ENCODE measurements at regions of chr7 and their contacts with region 1.

Region 1: DNA sequence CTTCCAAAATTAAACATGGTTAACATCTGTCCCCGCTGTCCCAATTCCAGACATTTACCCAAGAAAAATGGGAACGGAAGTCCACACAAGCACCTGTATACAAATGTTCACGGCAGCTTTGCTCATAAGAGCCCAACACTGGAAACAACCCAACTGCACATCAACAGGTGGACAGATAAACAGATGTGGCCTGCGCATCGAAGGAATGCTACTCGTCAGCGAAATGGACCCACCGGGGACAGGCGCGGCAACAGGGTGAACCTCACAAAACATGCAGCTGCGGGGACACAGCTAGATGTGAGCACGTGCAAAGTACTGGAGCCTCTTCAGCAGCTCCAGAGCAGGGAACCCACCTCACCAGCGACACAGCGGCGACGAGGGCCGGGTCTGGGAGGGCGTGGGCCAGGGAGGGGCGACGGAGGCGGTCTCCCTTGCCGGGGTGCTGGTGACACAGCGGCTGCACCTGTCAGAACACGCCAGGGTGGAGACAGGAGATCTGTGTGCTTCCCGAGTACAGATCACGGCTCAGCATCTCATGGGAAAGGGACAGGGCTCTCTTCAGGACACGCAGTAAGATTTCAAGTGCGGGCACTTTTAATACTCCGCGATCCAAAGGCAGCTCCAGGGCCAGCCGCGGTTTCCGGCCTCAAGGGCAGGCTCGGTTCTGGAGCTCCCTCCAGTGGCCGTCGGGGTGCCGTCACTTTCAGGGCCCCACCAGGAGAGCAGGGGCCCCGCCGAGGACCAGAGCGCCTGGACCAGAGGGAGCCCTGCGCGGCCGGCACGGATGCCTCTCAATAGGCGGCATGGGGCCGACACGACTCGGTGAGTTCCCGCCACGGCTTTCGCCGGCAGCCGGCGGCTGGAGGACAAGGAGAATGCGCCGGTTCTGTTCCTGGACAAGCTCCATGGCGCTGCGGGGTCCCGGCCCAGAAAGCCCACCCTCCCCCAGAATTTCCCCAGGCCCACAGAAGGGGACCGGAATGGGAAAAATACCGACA is 21.2 kb downstream of the GPR146 start:
- DNase-seq: peak; percentile 92
- CTCF ChIP-seq: peak; percentile 94

Region 2: GRCh38 chr7:891291-891690 is 174.3 kb before region 1 on chr7:
- CTCF ChIA-PET with region 1: no interaction called
- POLR2A ChIA-PET with region 1: no interaction called
- DNase-seq: no peak
- CTCF ChIP-seq: no peak

Region 3: GRCh38 chr7:974820-975681 is 90.5 kb before region 1 on chr7 and contains the start of gene COX19:
- CTCF ChIA-PET with region 1: interaction called, 25 read pairs
- POLR2A ChIA-PET with region 1: no interaction called
- DNase-seq: peak; percentile 94
- CTCF ChIP-seq: no peak

Region 4: DNA sequence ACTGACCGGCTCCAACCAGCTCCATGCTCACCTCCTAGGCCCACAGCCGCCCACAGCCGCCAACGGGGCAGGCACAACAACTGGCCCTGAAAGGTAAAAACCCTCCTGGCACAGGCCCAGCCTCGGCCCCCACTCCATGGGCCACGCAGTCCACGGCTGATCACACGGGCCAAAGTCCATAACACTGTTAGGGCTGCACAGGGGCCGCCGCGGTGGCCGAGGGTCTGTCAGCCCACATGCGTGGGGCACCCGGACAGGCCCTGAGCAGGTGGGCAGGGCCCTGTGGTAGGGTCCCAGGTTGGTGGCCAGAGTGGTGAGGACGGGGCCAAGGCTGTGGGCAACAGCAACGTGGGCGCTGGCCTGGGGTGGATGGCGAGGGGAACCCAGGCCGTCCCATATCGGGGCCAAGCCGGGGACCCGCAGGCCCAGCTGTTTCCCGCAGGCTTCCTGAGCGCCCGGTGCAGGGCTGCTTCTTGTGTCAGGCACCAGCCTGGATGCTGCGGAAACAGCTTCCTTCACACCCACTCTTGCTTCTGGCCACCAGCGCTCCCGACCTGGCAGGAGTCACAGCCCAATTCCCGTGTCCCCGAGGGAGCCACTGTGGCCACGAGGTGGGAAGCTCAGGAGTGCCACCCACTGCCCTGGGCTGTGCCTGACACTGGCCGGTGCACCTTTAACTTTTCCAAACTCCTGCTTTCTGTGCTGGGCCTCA is 53.4 kb before region 1 on chr7:
- CTCF ChIA-PET with region 1: interaction called, 11 read pairs
- POLR2A ChIA-PET with region 1: no interaction called
- DNase-seq: no peak
- CTCF ChIP-seq: no peak

Region 5: GRCh38 chr7:1028775-1029636 is 36.6 kb before region 1 on chr7:
- CTCF ChIA-PET with region 1: interaction called, 11 read pairs
- POLR2A ChIA-PET with region 1: no interaction called
- DNase-seq: peak; percentile 83
- CTCF ChIP-seq: no peak

Region 6: GRCh38 chr7:1053002-1053478 is 12.5 kb before region 1 on chr7:
- CTCF ChIA-PET with region 1: interaction called, 40 read pairs
- POLR2A ChIA-PET with region 1: no interaction called
- DNase-seq: no peak
- CTCF ChIP-seq: no peak

Region 7: GRCh38 chr7:1086588-1087464 is 21.3 kb after region 1 on chr7:
- CTCF ChIA-PET with region 1: interaction called, 47 read pairs
- POLR2A ChIA-PET with region 1: no interaction called
- DNase-seq: peak; percentile 90
- CTCF ChIP-seq: peak; percentile 85

Region 8: DNA sequence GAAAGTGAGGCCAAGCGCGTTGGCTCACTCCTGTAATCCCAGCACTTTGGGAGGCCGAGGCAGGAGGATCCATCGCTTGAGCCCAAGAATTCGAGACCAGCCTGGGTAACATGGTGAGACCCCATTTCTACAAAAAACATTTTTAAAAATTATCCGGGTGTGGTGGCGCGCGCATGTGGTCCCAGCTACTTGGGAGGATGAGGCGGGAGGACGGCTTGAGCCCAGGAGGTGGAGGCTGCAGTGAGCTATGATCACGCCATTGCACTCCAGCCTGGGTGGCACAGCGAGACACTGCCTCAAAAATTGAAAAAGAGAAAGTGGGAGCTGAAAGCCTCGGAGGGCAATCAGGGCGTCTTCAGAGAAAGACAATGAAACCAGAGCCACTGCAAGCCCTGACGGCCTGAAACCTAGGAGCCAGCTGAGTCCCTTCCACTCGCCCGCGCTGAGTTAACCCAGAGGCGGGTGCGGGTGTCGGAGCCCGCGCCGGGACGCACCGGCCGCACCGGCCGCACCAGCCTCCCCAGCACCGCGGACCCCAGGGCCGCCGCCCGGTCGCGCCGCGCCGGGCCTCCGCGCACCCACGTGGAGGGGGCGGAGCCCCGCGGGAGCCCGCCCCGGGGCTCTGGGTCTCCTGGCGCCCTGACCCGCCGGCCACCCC is 72.1 kb after region 1 on chr7:
- CTCF ChIA-PET with region 1: interaction called, 14 read pairs
- POLR2A ChIA-PET with region 1: interaction called, 3 read pairs
- DNase-seq: no peak
- CTCF ChIP-seq: no peak

Region 9: GRCh38 chr7:2051707-2052656 is 986.4 kb after region 1 on chr7:
- CTCF ChIA-PET with region 1: no interaction called
- POLR2A ChIA-PET with region 1: no interaction called
- DNase-seq: no peak
- CTCF ChIP-seq: no peak